ENCODE measurements at regions of chr11 and their contacts with region 1.

Region 1: GRCh38 chr11:120517390-120517761 is 5.8 kb downstream of the GRIK4 start:
- DNase-seq: no peak
- ATAC-seq: no peak
- H3K4me3 ChIP-seq: no peak overlapping the region
- H3K27ac ChIP-seq: no peak overlapping the region
- H3K4me1 ChIP-seq: no peaks in the 10 kb centered on the region
- H3K27me3 ChIP-seq: peaks cover 6 to 9% (median 7%) of the 10 kb centered on the region in 3 donors
- CTCF ChIP-seq: no peak
- POLR2A ChIP-seq: no peak

Region 2: GRCh38 chr11:120556797-120557196 is 39.4 kb after region 1 on chr11:
- in situ Hi-C with region 1: no loop called
- intact Hi-C with region 1: loop called (anchors 1 kb)
- DNase-seq: no peak
- ATAC-seq: no peak
- H3K4me3 ChIP-seq: no peak overlapping the region
- H3K27ac ChIP-seq: no peak overlapping the region
- H3K4me1 ChIP-seq: no peaks in the 10 kb centered on the region
- H3K27me3 ChIP-seq: no peaks in the 10 kb centered on the region
- CTCF ChIP-seq: no peak
- POLR2A ChIP-seq: no peak

Region 3: GRCh38 chr11:120688163-120688562 is 170.8 kb after region 1 on chr11:
- in situ Hi-C with region 1: loop called in 3 of 4 experiments (anchors 5 to 10 kb)
- intact Hi-C with region 1: no loop called
- DNase-seq: no peak
- ATAC-seq: no peak
- H3K4me3 ChIP-seq: no peak overlapping the region
- H3K27ac ChIP-seq: no peak overlapping the region
- H3K4me1 ChIP-seq: no peaks in the 10 kb centered on the region
- H3K27me3 ChIP-seq: no peaks in the 10 kb centered on the region
- CTCF ChIP-seq: no peak
- POLR2A ChIP-seq: no peak

Region 4: GRCh38 chr11:120908461-120909191 is 391.2 kb after region 1 on chr11:
- in situ Hi-C with region 1: no loop called
- intact Hi-C with region 1: no loop called
- DNase-seq: no peak
- ATAC-seq: no peak
- H3K4me3 ChIP-seq: no peak overlapping the region
- H3K27ac ChIP-seq: no peak overlapping the region
- H3K4me1 ChIP-seq: no peaks in the 10 kb centered on the region
- H3K27me3 ChIP-seq: no peaks in the 10 kb centered on the region
- CTCF ChIP-seq: no peak
- POLR2A ChIP-seq: no peak

Measured in gastrocnemius medialis (tissue), 4 donors.